Activated CD4-positive, alpha-beta T cell treated with anti-CD3 and anti-CD28 coated beads, Interleukin-2, amount 10 ng/mL, durations not matched to agents 24 days and 14 days (primary cell): ENCODE measurements at regions of chr17 and their contacts with region 1.

Region 1: GRCh38 chr17:75845049-75845860 is 1.1 kb upstream of the UNC13D start:
- DNase-seq: peak; percentile 88
- H3K4me3 Mint-ChIP-seq: peak overlapping the region; percentile 89
- H3K27ac Mint-ChIP-seq: peak overlapping the region; percentile 79
- H3K4me1 Mint-ChIP-seq: peaks cover 19% of the 10 kb centered on the region
- H3K27me3 Mint-ChIP-seq: no peaks in the 10 kb centered on the region

Region 2: GRCh38 chr17:75855310-75856081 is 10.2 kb after region 1 on chr17 and contains the start of gene WBP2:
- intact Hi-C with region 1: loop called (anchors 1 kb)
- DNase-seq: peak; percentile 99
- H3K4me3 Mint-ChIP-seq: no peak within 1 kb of the TSS
- H3K27ac Mint-ChIP-seq: peak within 1 kb of the TSS; percentile 92
- H3K4me1 Mint-ChIP-seq: peaks cover 31% of the 10 kb centered on the region
- H3K27me3 Mint-ChIP-seq: no peaks in the 10 kb centered on the region
- total RNA-seq, gene WBP2: 68.9 and 70.0 TPM in 2 replicates

Region 3: GRCh38 chr17:76097716-76098295 is 252.6 kb after region 1 on chr17:
- intact Hi-C with region 1: no loop called
- DNase-seq: no peak
- H3K4me3 Mint-ChIP-seq: no peak overlapping the region
- H3K27ac Mint-ChIP-seq: no peak overlapping the region
- H3K4me1 Mint-ChIP-seq: peaks cover 14% of the 10 kb centered on the region
- H3K27me3 Mint-ChIP-seq: no peaks in the 10 kb centered on the region